HCT116 (cell line): ENCODE measurements at regions of chr19 and their contacts with region 1.

Region 1: DNA sequence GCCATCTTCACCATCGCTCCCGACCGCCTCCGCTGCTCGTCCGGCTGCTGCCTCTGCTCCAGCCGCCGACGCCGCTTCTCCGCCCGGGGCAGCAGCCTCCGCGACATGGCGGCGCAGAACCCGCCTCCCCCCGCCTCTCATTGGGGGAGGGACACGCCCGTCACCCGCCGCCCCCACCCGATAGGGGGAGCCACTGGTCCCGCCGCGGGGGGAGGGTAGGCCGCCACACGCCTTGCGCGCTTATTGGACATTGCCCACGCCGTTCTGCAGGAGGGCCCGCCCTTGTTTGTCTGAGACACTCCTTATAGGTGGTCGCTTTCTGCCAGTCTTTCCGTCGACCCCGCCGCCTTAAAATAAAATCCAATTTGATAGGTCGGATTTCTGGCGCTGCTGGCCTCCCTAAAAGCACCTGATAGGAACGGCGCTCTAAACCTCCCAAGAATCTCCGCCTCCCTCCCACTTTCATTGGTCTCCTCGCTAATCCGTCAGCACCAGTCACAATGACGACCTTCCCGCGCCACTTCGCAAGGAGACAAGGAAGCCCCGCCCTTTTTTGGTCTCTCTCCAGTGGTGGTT is at the start of gene HNRNPL:
- DNase-seq: no peak
- ATAC-seq: peak; percentile 75
- H3K4me3 ChIP-seq: peak within 1 kb of the TSS; percentile 77 to 84
- H3K27ac ChIP-seq: peak within 1 kb of the TSS; percentile 98
- H3K4me1 ChIP-seq: peaks cover 14 to 41% of the 10 kb centered on the region in 2 experiments
- H3K27me3 ChIP-seq: no peaks in the 10 kb centered on the region
- CTCF ChIP-seq: peak in 1 of 3 experiments; percentile 40; a peak in 3 of 6 replicates
- POLR2A ChIP-seq: no peak
- RAD21 ChIP-seq: no peak
- total RNA-seq, gene HNRNPL: 551 TPM

Region 2: DNA sequence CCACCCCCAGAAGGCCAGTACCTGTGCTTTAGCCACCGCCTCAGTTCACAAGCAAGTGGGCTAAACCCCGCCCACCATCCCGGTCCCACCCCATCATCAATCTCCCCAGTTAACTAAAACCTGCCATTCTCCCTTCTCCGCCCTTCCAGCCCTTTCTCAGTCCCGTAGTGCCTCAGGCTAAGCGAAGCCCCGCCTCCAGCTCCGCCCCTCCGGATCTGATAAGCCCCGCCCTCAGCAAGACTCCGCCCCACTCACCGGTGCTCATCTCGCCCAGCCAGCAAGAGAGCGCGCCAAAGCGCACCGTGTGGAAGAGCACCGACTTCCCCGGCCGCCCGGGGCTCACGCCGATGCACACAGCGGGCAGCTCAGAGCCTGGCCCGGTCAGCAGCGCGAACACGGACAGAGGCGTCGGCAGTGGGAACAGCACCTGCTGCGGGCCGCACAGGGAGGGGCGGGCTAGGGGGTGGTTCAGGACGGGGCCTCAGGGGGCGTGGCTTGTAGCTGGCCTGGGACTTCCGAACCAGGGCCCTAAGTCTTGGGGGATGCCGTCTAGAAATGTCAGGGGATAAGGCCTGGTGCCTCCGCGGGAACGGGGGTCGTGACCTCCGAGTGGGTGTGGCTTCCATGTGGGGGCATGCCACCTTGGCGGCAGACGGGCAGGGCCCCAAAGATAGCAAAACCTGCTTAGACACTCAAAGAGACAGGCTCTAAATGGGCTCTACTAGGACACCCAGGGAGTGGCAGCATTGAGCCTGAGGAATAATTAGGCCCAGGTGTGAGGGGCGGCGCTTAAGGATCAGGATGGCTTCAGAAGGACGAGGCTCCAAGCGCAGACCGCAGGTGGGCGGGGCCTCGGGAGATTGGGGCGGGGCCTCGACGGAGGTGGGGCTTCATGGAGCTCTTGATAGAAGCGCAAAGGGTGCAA is 253.6 kb before region 1 on chr19:
- CTCF ChIA-PET with region 1: no interaction called
- POLR2A ChIA-PET with region 1: no interaction called
- RAD21 ChIA-PET with region 1: no interaction called
- intact Hi-C with region 1: no loop called
- DNase-seq: peak; percentile 71
- ATAC-seq: peak; percentile 88
- H3K4me3 ChIP-seq: peak overlapping the region; percentile 32 to 45
- H3K27ac ChIP-seq: peak overlapping the region; percentile 55; the same call in 1 of the 2 replicates
- H3K4me1 ChIP-seq: peaks cover 5 to 19% of the 10 kb centered on the region in 2 experiments; a peak in 3 of 4 replicates
- H3K27me3 ChIP-seq: no peaks in the 10 kb centered on the region
- CTCF ChIP-seq: no peak
- POLR2A ChIP-seq: no peak
- RAD21 ChIP-seq: no peak

Region 3: GRCh38 chr19:38683393-38684080 is 166.4 kb before region 1 on chr19:
- CTCF ChIA-PET with region 1: no interaction called
- POLR2A ChIA-PET with region 1: interaction called, 4 read pairs
- RAD21 ChIA-PET with region 1: no interaction called
- intact Hi-C with region 1: loop called (anchors 5 kb)
- DNase-seq: peak; percentile 99
- ATAC-seq: peak; percentile 74
- H3K4me3 ChIP-seq: peak overlapping the region; percentile 36 to 53
- H3K27ac ChIP-seq: peak overlapping the region; percentile 98
- H3K4me1 ChIP-seq: peaks cover 82 to 99% of the 10 kb centered on the region in 2 experiments
- H3K27me3 ChIP-seq: no peaks in the 10 kb centered on the region
- CTCF ChIP-seq: no peak
- POLR2A ChIP-seq: no peak
- RAD21 ChIP-seq: no peak; the same call in none of the 2 replicates

Region 4: GRCh38 chr19:38838573-38839269 is 11.2 kb before region 1 on chr19:
- CTCF ChIA-PET with region 1: no interaction called
- POLR2A ChIA-PET with region 1: interaction called, 16 read pairs
- RAD21 ChIA-PET with region 1: no interaction called
- intact Hi-C with region 1: no loop called
- DNase-seq: peak; percentile 46
- ATAC-seq: peak; percentile 50
- H3K4me3 ChIP-seq: no peak overlapping the region
- H3K27ac ChIP-seq: peak overlapping the region; percentile 15
- H3K4me1 ChIP-seq: peaks cover 0 to 26% of the 10 kb centered on the region in 2 experiments; a peak in 2 of 4 replicates
- H3K27me3 ChIP-seq: no peaks in the 10 kb centered on the region
- CTCF ChIP-seq: 0 out of 6 replicates have a peak, but pooled peaks of 1 of the 3 experiments have one; percentile 9
- POLR2A ChIP-seq: no peak
- RAD21 ChIP-seq: peak; percentile 58

Region 5: DNA sequence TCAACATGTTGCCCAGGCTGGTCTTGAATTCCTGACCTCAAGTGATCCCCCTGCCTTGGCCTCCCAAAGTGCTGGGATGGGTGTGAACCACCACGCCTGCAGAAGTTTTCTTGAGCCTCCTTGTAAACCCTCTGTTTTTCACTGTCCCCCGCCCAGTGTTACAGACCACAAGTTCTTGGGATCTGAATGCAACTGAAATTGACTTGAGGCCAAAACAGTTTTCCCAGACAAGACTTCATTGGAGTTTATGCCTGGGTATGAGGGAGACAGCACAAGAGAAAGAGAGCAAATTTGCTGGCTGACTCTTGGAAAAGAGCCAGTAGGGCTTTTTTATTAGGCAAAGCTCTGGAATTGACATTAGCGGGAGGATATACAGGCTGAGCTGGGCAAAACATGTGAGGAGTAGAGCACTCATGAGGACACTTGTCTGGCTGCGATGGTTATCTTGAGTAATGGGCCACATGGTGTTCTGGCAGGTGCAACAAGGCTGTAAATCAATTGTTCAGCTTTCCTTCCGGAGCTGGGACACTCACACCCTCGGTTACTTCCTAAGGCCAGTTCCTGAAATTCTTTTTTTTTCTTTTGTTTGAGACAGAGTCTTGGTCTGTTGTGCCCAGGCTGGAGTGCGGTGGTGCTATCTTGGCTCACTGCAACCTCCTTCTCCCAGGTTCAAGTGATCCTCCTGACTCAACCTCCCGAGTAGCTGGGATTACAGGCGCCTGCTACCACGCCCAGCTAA is 12.5 kb after region 1 on chr19:
- CTCF ChIA-PET with region 1: no interaction called
- POLR2A ChIA-PET with region 1: interaction called, 12 read pairs
- RAD21 ChIA-PET with region 1: no interaction called
- intact Hi-C with region 1: no loop called
- DNase-seq: no peak
- ATAC-seq: no peak
- H3K4me3 ChIP-seq: no peak overlapping the region
- H3K27ac ChIP-seq: no peak overlapping the region
- H3K4me1 ChIP-seq: peaks cover 3 to 20% of the 10 kb centered on the region in 2 experiments; a peak in 3 of 4 replicates
- H3K27me3 ChIP-seq: no peaks in the 10 kb centered on the region
- CTCF ChIP-seq: no peak
- POLR2A ChIP-seq: no peak
- RAD21 ChIP-seq: no peak

Region 6: DNA sequence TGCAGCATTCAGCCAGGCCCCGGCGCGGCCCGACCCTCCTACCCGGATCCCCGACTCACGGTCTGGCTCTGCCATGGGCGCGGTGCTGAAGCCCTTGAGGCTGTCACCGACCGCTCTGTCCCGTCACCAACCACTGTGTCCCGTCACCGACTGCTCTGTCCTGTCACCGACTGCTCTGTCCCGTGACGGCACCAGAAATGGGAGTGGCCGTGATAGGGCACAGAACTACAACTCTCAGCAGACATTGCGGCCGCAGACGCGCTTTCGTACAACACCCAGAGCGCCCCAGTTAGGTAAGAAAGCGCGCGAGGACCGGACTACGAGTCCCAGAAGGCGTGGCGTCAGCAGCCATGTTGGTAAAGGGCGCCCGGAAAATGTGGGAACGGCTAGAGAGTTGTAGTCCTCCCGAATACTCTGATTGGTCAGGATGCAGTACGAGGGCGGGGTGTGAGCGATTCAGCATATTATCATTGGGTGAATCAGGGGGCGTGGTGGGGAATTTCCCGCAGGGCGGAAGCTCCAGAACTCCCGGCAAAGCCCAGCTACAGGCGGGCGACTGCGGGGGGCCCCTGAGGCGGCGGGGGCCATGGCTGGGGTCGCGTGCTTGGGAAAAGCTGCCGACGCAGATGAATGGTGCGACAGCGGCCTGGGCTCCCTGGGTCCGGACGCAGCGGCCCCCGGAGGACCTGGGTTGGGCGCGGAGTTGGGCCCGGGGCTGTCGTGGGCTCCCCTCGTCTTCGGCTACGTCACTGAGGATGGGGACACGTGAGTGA is 49.7 kb after region 1 on chr19 and contains the starts of genes NFKBIB and SIRT2:
- CTCF ChIA-PET with region 1: no interaction called
- POLR2A ChIA-PET with region 1: no interaction called
- RAD21 ChIA-PET with region 1: no interaction called
- intact Hi-C with region 1: loop called (anchors 1 kb)
- DNase-seq: peak; percentile 100
- ATAC-seq: peak; percentile 94
- H3K4me3 ChIP-seq: peak within 1 kb of the TSS; percentile 68 to 85
- H3K27ac ChIP-seq: peak within 1 kb of the TSS; percentile 59
- H3K4me1 ChIP-seq: peaks cover 0 to 18% of the 10 kb centered on the region in 2 experiments; a peak in 2 of 4 replicates
- H3K27me3 ChIP-seq: no peaks in the 10 kb centered on the region
- CTCF ChIP-seq: no peak
- POLR2A ChIP-seq: peak; percentile 43
- RAD21 ChIP-seq: no peak
- total RNA-seq, gene NFKBIB: 51.2 TPM
- total RNA-seq, gene SIRT2: 15.4 TPM

Region 7: GRCh38 chr19:39046118-39046821 is 196.3 kb after region 1 on chr19:
- CTCF ChIA-PET with region 1: no interaction called
- POLR2A ChIA-PET with region 1: no interaction called
- RAD21 ChIA-PET with region 1: no interaction called
- intact Hi-C with region 1: no loop called
- DNase-seq: peak; percentile 32
- ATAC-seq: peak; percentile 96
- H3K4me3 ChIP-seq: no peak overlapping the region
- H3K27ac ChIP-seq: no peak overlapping the region
- H3K4me1 ChIP-seq: peaks cover 3 to 11% of the 10 kb centered on the region in 2 experiments; a peak in 2 of 4 replicates
- H3K27me3 ChIP-seq: no peaks in the 10 kb centered on the region
- CTCF ChIP-seq: no peak
- POLR2A ChIP-seq: no peak
- RAD21 ChIP-seq: no peak

Region 8: GRCh38 chr19:39090881-39091280 is 240.9 kb after region 1 on chr19:
- CTCF ChIA-PET with region 1: no interaction called
- POLR2A ChIA-PET with region 1: no interaction called
- RAD21 ChIA-PET with region 1: no interaction called
- intact Hi-C with region 1: no loop called
- DNase-seq: no peak
- ATAC-seq: no peak
- H3K4me3 ChIP-seq: no peak overlapping the region
- H3K27ac ChIP-seq: no peak overlapping the region
- H3K4me1 ChIP-seq: no peaks in the 10 kb centered on the region
- H3K27me3 ChIP-seq: no peaks in the 10 kb centered on the region
- CTCF ChIP-seq: no peak
- POLR2A ChIP-seq: no peak
- RAD21 ChIP-seq: no peak